Activated CD4-positive, alpha-beta memory T cell treated with anti-CD3 and anti-CD28 coated beads for 36 hours (primary cell): ENCODE measurements at regions of chr19 and their contacts with region 1.

Region 1: DNA sequence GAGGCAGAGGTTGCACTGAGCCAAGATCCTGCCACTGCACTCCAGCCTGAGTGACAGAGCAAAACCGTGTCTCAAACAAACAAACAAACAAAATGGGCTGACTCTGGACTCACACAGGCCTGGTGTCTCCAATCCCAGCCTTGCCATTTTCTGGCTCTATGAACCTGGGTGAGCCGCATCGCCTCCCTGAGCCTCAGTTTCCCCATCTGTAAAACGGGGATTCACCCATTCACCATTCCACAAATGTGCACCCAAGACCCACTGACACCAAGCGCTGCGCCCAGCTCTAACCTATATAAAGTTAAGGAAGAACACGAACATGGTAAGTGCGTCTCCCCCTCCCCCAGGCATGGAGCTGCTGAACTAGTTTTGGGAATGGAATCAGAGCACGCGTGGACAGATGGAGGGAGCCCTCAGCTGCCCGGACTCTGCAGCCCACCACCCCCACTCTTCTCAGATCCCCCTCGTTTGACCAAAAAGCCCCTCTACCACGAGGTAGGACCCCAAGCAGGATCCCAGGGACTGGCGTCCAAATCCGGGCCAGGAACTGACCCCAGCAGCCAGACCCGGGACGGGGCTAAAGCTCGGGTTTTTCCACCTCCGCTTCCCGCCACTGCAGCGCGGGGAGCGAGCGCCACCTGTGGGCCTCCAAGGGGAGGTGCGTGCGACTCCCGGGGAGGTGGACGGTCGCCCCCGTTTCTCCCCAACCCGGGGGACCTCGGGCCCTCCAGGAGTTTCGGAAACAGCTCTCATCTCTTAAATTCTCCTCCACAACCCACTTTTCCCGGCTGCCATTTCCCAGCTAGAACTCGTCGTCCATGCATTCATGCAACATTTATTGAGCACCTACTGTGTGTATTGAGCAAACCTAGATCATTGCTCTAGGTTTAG is 33.0 kb upstream of the ADGRE5 start:
- DNase-seq: peak; percentile 79
- H3K4me3 Mint-ChIP-seq: peak overlapping the region; percentile 55
- H3K27ac Mint-ChIP-seq: peak overlapping the region; percentile 45
- H3K4me1 Mint-ChIP-seq: peaks cover 22% of the 10 kb centered on the region
- H3K27me3 Mint-ChIP-seq: no peaks in the 10 kb centered on the region

Region 2: GRCh38 chr19:14147797-14148605 is 200.2 kb before region 1 on chr19:
- CTCF ChIA-PET with region 1: interaction called, 11 read pairs
- POLR2A ChIA-PET with region 1: no interaction called
- intact Hi-C with region 1: no loop called
- DNase-seq: peak; percentile 73
- H3K4me3 Mint-ChIP-seq: no peak overlapping the region
- H3K27ac Mint-ChIP-seq: peak overlapping the region; percentile 92
- H3K4me1 Mint-ChIP-seq: peaks cover 38% of the 10 kb centered on the region
- H3K27me3 Mint-ChIP-seq: no peaks in the 10 kb centered on the region

Region 3: GRCh38 chr19:14183741-14184350 is 164.4 kb before region 1 on chr19:
- CTCF ChIA-PET with region 1: interaction called, 13 read pairs
- POLR2A ChIA-PET with region 1: no interaction called
- intact Hi-C with region 1: no loop called
- DNase-seq: no peak
- H3K4me3 Mint-ChIP-seq: no peak overlapping the region
- H3K27ac Mint-ChIP-seq: no peak overlapping the region
- H3K4me1 Mint-ChIP-seq: no peaks in the 10 kb centered on the region
- H3K27me3 Mint-ChIP-seq: no peaks in the 10 kb centered on the region

Region 4: DNA sequence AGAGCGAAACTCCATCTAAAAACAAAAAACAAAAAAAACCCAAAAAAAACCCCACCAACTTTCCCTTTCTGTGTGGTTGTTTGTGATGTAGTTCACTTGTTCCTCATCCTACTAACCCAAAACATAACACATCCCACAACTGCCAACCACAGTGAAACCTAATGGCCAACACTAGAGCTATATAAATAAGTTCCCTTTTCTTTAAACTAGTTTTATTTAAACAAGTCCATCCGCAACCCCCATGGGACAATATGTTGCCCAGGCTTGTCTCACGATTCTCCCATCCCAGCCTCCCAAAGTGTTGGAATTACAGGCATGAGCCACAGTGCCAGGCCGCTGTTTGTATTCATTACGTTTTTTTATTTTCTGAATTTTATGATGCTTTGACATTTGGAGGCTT is 38.2 kb before region 1 on chr19:
- CTCF ChIA-PET with region 1: no interaction called
- POLR2A ChIA-PET with region 1: no interaction called
- intact Hi-C with region 1: no loop called
- DNase-seq: no peak
- H3K4me3 Mint-ChIP-seq: no peak overlapping the region
- H3K27ac Mint-ChIP-seq: no peak overlapping the region
- H3K4me1 Mint-ChIP-seq: no peaks in the 10 kb centered on the region
- H3K27me3 Mint-ChIP-seq: no peaks in the 10 kb centered on the region

Region 5: DNA sequence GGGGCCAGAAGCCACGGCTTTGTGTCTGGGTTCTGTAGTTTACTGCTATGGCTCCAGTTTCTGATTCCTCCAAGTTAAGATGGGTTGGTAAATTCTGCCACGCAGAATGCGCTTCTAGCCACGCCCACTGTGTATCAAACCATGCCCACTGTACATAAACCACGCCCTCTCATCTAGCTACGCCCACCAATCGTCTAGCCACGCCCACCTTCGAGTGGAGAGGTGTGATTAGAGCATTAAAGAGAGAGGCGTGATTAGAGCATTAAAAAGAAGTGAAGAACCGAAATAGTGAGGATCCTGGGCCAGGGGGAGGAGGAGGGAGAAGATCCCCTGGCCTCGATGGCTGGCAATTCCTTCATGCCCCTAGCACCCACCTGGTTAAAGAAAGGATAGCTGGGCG is 10.7 kb before region 1 on chr19:
- CTCF ChIA-PET with region 1: interaction called, 50 read pairs
- POLR2A ChIA-PET with region 1: no interaction called
- intact Hi-C with region 1: no loop called
- DNase-seq: peak; percentile 58
- H3K4me3 Mint-ChIP-seq: no peak overlapping the region
- H3K27ac Mint-ChIP-seq: no peak overlapping the region
- H3K4me1 Mint-ChIP-seq: peaks cover 9% of the 10 kb centered on the region
- H3K27me3 Mint-ChIP-seq: no peaks in the 10 kb centered on the region

Region 6: DNA sequence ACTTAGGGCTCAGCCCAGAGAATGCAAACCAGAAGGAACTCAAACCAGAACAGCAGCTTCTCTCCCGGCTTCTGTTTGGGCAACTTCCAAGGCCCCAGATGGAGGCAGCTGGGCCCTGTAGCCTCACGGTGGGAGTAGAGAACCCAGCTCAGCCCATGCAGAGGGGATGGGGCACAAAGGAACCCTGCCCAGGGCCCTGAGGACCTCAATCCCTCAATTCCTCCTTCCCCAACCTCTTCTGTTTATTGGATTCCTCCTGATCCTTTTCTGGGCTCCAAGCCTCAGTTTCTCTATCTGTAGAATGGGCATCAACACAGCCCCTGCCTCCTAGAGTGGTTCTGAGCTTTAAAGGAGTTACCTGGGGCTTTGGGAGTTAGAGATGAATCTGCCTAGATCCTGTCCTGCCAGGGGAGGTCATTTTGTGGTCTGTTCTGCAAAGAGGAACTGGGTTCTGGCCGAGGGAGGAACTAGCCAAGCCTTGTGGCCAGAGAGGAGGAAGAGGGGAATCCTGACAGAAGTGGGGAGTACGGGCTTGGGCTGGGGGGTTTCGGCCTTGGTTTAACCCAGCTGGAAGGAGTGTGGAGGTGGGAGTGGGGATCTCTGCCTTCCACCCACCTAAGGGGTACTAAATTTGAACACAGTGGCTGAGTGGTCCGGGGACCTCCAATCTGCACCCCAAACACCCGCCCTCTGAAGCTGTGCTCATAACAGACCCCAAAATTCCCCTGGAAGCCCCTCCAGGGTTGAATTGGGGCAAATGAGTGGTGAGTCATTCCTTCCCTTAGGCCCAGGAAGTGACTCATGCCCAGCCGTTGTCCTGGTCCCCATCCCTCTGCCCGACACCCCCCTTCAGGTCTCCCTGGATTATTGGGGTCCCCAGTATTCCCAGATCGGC is 35.7 kb after region 1 on chr19:
- CTCF ChIA-PET with region 1: interaction called, 19 read pairs
- POLR2A ChIA-PET with region 1: interaction called, 5 read pairs
- intact Hi-C with region 1: loop called (anchors 1 kb)
- DNase-seq: peak; percentile 81
- H3K4me3 Mint-ChIP-seq: peak overlapping the region; percentile 84
- H3K27ac Mint-ChIP-seq: peak overlapping the region; percentile 95
- H3K4me1 Mint-ChIP-seq: peaks cover 30% of the 10 kb centered on the region
- H3K27me3 Mint-ChIP-seq: no peaks in the 10 kb centered on the region

Region 7: GRCh38 chr19:14405758-14406644 is 57.8 kb after region 1 on chr19:
- CTCF ChIA-PET with region 1: interaction called, 11 read pairs
- POLR2A ChIA-PET with region 1: interaction called, 4 read pairs
- intact Hi-C with region 1: no loop called
- DNase-seq: peak; percentile 93
- H3K4me3 Mint-ChIP-seq: no peak overlapping the region
- H3K27ac Mint-ChIP-seq: peak overlapping the region; percentile 76
- H3K4me1 Mint-ChIP-seq: peaks cover 25% of the 10 kb centered on the region
- H3K27me3 Mint-ChIP-seq: no peaks in the 10 kb centered on the region